Ovary (tissue), 10 donors: ENCODE measurements at regions of chr15 and their contacts with region 1.

Region 1: GRCh38 chr15:86489981-86490380 is 410.3 kb downstream of the AGBL1 start:
- DNase-seq: no peak
- H3K4me3 ChIP-seq: no peak overlapping the region
- H3K27ac ChIP-seq: no peak overlapping the region
- H3K4me1 ChIP-seq: no peaks in the 10 kb centered on the region
- H3K27me3 ChIP-seq: no peaks in the 10 kb centered on the region
- CTCF ChIP-seq: no peak
- EP300 ChIP-seq: no peak
- POLR2A ChIP-seq: no peak

Region 2: GRCh38 chr15:86432861-86433260 is 57.1 kb before region 1 on chr15:
- intact Hi-C with region 1: loop called in 1 of 4 experiments (anchors 10 kb)
- DNase-seq: no peak
- H3K4me3 ChIP-seq: no peak overlapping the region
- H3K27ac ChIP-seq: no peak overlapping the region
- H3K4me1 ChIP-seq: no peaks in the 10 kb centered on the region
- H3K27me3 ChIP-seq: no peaks in the 10 kb centered on the region
- CTCF ChIP-seq: no peak
- EP300 ChIP-seq: no peak
- POLR2A ChIP-seq: no peak